Prostate gland (tissue), 2 donors: ENCODE measurements at regions of chr20 and their contacts with region 1.

Region 1: DNA sequence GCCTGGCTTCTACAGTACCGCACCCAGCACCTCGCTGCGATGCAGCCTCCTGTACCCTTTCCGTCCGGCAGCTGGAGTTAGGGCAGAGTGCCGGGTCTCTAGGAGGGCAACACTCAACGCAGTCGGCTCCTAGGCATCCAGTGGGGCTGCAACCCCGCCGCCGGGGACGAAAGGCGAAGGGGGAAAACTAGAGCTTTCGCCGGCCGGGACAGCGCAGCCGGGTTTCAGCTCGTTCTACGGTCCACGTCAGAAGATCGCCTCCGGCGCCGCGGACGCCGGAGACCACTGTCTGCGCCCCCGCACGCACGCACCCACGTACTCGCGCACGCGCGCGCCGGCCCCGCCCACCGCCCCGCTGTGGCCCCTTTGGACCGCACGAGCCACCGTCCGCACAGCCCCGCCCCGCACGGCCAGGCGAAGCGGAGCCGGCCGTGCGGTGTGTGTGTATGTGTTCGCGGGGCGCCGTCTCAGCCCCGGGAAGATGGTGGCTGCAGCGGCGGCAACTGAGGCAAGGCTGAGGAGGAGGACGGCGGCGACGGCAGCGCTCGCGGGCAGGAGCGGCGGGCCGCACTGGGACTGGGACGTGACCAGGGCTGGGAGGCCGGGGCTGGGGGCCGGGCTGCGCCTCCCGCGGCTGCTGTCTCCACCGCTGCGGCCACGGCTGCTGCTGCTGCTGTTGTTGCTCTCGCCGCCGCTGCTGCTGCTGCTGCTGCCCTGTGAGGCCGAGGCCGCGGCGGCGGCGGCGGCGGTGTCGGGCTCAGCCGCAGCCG is at the start of gene ATRN:
- DNase-seq: peak; percentile 81
- H3K4me3 ChIP-seq: peak within 1 kb of the TSS; percentile 92 to 98
- H3K27ac ChIP-seq: peak within 1 kb of the TSS; percentile 69 to 83
- H3K4me1 ChIP-seq: peaks cover 6% of the 10 kb centered on the region
- H3K27me3 ChIP-seq: no peaks in the 10 kb centered on the region
- CTCF ChIP-seq: peak in 1 of 4 experiments; percentile 3
- POLR2A ChIP-seq: peak; percentile 43
- total RNA-seq, gene ATRN: 34.6 to 38.1 TPM

Region 2: DNA sequence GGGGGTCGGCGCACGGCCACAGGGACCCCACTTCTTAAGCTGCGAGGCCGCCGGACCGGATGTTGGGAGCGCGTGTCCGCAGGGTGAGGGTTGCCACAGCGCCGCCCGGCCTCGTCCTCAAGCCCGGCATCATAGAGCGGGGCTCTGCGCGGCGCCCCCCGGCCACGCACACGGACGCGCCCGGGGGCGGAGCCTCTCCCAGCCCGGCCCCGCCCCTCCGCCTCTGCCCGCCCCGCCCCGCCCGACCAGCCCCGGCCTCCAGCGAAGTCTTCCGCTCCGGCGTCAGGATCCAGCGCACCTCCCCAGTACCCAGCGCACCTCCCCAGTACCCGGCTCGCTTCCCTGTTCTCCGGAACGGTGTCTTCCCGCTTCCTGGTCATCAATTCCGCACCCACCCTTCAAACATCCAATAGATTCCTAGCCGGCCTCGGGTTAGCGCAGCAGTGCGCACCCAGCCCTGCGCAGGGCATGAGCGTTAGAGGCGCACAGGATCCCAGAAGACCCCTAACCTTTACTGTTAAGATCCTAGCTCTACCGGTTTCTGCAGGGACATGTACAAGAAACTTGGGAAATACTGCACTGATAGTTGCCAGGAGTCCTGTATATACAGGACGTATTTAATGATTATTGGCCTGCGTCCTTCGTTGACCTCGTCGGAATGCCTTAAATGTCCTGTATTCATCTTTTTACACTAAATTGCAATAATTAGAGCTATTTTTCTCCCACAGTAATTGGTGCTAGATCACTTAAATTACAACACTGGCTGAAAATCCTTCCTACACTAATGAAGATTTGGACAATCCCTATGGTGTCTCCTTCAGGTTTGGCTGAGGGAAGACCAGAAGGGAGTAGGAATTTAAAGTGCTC is 62.8 kb before region 1 on chr20:
- intact Hi-C with region 1: loop called (anchors 5 kb)
- DNase-seq: peak; percentile 76
- H3K4me3 ChIP-seq: peak overlapping the region; percentile 83 to 85
- H3K27ac ChIP-seq: peak overlapping the region; percentile 88 to 94
- H3K4me1 ChIP-seq: no peaks in the 10 kb centered on the region
- H3K27me3 ChIP-seq: no peaks in the 10 kb centered on the region
- CTCF ChIP-seq: no peak
- POLR2A ChIP-seq: peak; percentile 52